ENCODE measurements at regions of chr5 and their contacts with region 1.

Region 1: GRCh38 chr5:158695595-158696330 is 404.0 kb downstream of the EBF1 start:
- DNase-seq: peak; percentile 76
- ATAC-seq: peak; percentile 96
- H3K4me3 Mint-ChIP-seq: no peak overlapping the region
- H3K27ac Mint-ChIP-seq: peak overlapping the region; percentile 73
- H3K4me1 Mint-ChIP-seq: peaks cover 26% of the 10 kb centered on the region
- H3K27me3 Mint-ChIP-seq: no peaks in the 10 kb centered on the region
- CTCF ChIP-seq: peak; percentile 92

Region 2: DNA sequence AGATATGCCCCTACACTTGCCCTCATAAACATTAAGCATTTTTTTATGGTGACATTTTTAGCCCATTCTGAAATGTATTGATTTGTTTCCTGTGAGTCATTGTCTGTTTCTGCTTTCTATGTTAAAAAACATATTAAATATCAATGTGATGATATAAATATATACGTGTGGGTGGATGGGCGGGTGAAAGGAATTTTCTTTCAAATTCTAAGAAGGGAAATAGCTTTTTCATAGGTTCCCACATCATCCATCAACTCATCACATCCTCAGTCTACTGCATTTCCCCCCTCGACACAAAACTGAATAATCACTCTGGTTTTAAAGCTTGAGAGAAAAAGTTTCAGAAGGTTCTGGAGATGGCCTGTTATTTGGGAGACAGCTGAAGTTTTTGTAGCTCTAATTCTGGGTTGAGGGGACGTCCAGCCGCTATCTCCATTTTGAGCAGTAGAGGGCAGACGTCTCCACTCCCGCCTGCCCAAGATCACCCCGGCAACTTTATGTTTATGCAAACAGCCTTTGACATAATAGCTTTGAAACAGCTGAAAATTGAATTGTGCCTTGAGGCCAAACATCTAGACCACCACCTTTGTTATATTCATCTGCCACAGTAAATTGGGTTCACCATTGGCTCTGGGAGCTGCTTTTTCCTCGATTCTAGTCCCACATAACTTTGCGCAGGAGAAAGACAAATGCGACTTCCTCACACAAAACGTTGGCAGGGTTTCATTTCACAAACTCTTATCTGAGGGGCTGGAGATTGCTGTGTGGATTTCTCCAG is 620.6 kb before region 1 on chr5:
- CTCF ChIA-PET with region 1: interaction called, 20 read pairs
- POLR2A ChIA-PET with region 1: interaction called, 5 read pairs
- intact Hi-C with region 1: loop called (anchors 1 kb)
- DNase-seq: peak; percentile 48
- ATAC-seq: peak; percentile 95
- H3K4me3 Mint-ChIP-seq: peak overlapping the region; percentile 42
- H3K27ac Mint-ChIP-seq: peak overlapping the region; percentile 73
- H3K4me1 Mint-ChIP-seq: peaks cover 20% of the 10 kb centered on the region
- H3K27me3 Mint-ChIP-seq: peaks cover 2% of the 10 kb centered on the region
- CTCF ChIP-seq: no peak

Region 3: DNA sequence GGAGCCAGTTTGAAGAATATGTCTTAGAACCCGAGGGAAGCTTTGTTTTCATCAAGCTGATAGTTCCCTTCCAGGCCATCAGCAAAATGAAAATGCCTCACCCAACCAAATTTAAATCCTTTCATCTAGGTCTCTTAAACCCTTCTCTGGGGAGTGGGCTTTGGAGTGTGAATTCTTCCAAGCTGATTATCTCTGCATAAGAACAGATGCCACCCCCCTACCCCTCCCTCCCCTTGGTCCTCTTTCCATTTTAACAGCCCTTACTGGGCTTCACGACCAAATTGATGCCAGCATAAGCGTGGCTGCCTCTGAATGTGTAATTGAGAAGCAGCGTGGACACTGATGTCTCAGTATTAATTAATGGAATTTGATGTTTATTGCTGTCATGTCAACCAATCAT is 327.1 kb before region 1 on chr5:
- CTCF ChIA-PET with region 1: no interaction called
- POLR2A ChIA-PET with region 1: no interaction called
- intact Hi-C with region 1: no loop called
- DNase-seq: no peak
- ATAC-seq: no peak
- H3K4me3 Mint-ChIP-seq: no peak overlapping the region
- H3K27ac Mint-ChIP-seq: no peak overlapping the region
- H3K4me1 Mint-ChIP-seq: no peaks in the 10 kb centered on the region
- H3K27me3 Mint-ChIP-seq: no peaks in the 10 kb centered on the region
- CTCF ChIP-seq: no peak

Region 4: GRCh38 chr5:158751961-158752655 is 56.3 kb after region 1 on chr5:
- CTCF ChIA-PET with region 1: interaction called, 4 read pairs
- POLR2A ChIA-PET with region 1: no interaction called
- intact Hi-C with region 1: loop called (anchors 2 kb)
- DNase-seq: no peak
- ATAC-seq: peak; percentile 83
- H3K4me3 Mint-ChIP-seq: peak overlapping the region; percentile 71
- H3K27ac Mint-ChIP-seq: peak overlapping the region; percentile 84
- H3K4me1 Mint-ChIP-seq: peaks cover 92% of the 10 kb centered on the region
- H3K27me3 Mint-ChIP-seq: no peaks in the 10 kb centered on the region
- CTCF ChIP-seq: no peak

Region 5: DNA sequence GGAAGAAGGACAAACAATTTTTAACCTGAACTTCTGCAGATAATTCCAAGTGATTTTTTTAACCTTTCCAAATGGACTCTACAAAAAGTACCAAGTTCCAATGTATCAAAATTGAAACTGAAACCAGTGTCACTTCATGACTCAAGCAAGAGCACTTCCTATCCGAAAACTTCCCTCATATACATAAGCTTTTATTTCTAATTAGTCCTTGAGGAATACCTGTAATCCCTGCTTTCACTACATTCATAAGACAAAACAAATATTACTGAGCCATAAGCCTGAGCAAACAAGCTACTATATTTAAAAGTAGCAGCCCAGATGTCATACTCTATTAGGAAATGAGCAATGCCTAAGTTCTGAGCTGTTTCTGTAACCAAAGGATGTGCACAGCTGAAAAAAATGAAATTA is 179.5 kb after region 1 on chr5:
- CTCF ChIA-PET with region 1: interaction called, 12 read pairs
- POLR2A ChIA-PET with region 1: interaction called, 17 read pairs
- intact Hi-C with region 1: loop called (anchors 2 kb)
- DNase-seq: no peak
- ATAC-seq: peak; percentile 36
- H3K4me3 Mint-ChIP-seq: peak overlapping the region; percentile 72
- H3K27ac Mint-ChIP-seq: peak overlapping the region; percentile 93
- H3K4me1 Mint-ChIP-seq: peaks cover 93% of the 10 kb centered on the region
- H3K27me3 Mint-ChIP-seq: no peaks in the 10 kb centered on the region
- CTCF ChIP-seq: no peak

Region 6: GRCh38 chr5:159061179-159061796 is 365.5 kb after region 1 on chr5:
- CTCF ChIA-PET with region 1: interaction called, 17 read pairs
- POLR2A ChIA-PET with region 1: no interaction called
- intact Hi-C with region 1: no loop called
- DNase-seq: no peak
- ATAC-seq: no peak
- H3K4me3 Mint-ChIP-seq: no peak overlapping the region
- H3K27ac Mint-ChIP-seq: no peak overlapping the region
- H3K4me1 Mint-ChIP-seq: peaks cover 69% of the 10 kb centered on the region
- H3K27me3 Mint-ChIP-seq: no peaks in the 10 kb centered on the region
- CTCF ChIP-seq: no peak

Region 7: DNA sequence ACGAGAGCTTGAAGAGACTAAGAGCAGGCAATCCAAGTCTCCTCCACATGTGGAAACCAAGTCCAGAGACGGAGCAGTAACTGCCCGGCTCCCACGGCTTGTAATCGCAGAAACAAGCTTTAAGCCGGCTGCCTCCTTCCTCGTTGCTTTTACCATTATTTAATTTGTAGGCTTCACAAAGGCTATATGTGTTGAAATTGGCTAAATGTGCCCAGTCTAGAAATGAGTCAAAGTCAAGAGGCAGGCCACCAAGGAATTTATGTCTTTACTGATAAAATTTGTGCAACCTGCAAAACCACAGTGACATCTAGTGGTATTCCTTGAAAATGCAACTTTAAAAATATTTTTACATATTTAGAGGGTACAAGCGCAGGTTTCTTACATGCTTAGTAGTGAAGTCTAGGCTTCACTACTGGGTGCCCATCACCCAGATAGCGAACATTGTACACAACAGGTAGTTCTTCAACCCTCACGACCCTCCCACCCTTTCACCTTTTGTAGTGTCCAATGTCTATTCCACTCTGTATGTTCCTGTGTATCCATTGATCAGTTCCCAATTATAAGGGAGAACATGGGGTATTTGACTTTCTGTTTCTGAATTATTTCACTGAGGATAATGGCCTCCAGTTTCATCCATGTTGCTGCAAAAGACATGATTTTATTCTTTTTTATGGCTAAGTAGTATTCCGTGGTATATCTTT is 437.4 kb after region 1 on chr5:
- CTCF ChIA-PET with region 1: interaction called, 19 read pairs
- POLR2A ChIA-PET with region 1: interaction called, 6 read pairs
- intact Hi-C with region 1: loop called (anchors 1 kb)
- DNase-seq: no peak
- ATAC-seq: peak; percentile 50
- H3K4me3 Mint-ChIP-seq: no peak overlapping the region
- H3K27ac Mint-ChIP-seq: no peak overlapping the region
- H3K4me1 Mint-ChIP-seq: no peaks in the 10 kb centered on the region
- H3K27me3 Mint-ChIP-seq: no peaks in the 10 kb centered on the region
- CTCF ChIP-seq: peak; percentile 82

Measured in activated B cell treated with CpG ODN at 0.5 μM for 24 hours (primary cell).